ENCODE measurements at regions of chr20 and their contacts with region 1.

Region 1: DNA sequence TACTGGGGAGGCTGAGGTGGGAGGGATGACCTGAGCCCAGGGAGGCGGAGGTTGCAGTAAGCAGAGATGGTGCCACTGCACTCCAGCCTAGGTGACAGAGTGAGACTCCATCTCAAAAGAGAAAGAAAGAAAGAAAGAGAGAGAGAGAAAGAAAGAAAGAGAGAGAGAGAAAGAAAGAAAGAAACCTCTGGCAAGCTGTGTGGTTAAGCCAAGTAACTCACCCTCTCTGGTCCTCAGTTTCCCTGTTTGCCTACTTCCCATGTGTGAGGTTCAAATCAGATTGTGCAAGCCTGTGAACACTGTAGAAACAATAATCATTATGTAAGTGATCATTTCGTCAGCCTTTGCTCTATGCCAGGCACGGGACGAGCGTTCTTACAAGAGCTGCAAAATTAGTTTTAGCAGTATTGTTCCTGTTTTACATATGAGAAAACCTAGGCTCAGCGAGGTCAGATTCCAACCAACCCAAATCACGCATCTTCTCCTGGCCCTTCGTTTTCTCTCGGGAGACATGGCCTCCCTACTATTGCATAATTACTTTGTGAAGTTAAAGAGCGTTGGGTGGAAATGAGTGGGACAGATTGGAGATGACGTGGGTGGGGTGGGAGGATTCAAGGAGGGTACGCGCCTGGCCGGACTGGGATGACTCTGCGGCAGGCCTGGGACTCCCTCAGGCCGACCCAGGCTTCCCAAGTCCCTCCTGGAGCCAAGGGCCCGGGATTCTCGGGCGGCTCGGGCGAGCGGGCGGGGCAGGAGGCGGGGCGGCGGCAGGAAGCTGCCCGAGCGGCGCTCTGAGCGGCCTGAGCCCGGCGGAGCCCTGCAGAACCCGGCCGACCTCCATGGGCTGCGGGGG is at the start of gene SNX21:
- DNase-seq: peak; percentile 89 to 92
- ATAC-seq: peak; percentile 88 to 92 (median 89)
- H3K4me3 ChIP-seq: peak within 1 kb of the TSS; percentile 49 to 90 (median 75)
- H3K27ac ChIP-seq: peak within 1 kb of the TSS; percentile 78 to 99 (median 95)
- H3K4me1 ChIP-seq: peaks cover 7 to 59% (median 39%) of the 10 kb centered on the region in 9 donors
- H3K27me3 ChIP-seq: no peaks in the 10 kb centered on the region
- CTCF ChIP-seq: no peak
- total RNA-seq, gene SNX21: 15.4 to 27.0 (median 19.3) TPM

Region 2: GRCh38 chr20:45798935-45799642 is 34.2 kb before region 1 on chr20:
- intact Hi-C with region 1: no loop called
- DNase-seq: peak in 1 of 2 donors; percentile 61
- ATAC-seq: peak; percentile 55 to 86 (median 70)
- H3K4me3 ChIP-seq: no peak overlapping the region
- H3K27ac ChIP-seq: peak overlapping the region in 1 of 10 donors; percentile 6
- H3K4me1 ChIP-seq: peaks cover 0 to 27% (median 4%) of the 10 kb centered on the region in 9 donors
- H3K27me3 ChIP-seq: no peaks in the 10 kb centered on the region
- CTCF ChIP-seq: peak; percentile 48 to 82 (median 71)

Region 3: GRCh38 chr20:45857114-45857881 is 24.0 kb after region 1 on chr20 and contains the starts of genes ACOT8 and ZSWIM3:
- intact Hi-C with region 1: loop called in 1 of 10 experiments (anchors 2 kb)
- DNase-seq: peak; percentile 80 to 100
- ATAC-seq: peak; percentile 97 to 99 (median 99)
- H3K4me3 ChIP-seq: peak within 1 kb of the TSS; percentile 60 to 99 (median 86)
- H3K27ac ChIP-seq: peak within 1 kb of the TSS; percentile 7 to 96 (median 87)
- H3K4me1 ChIP-seq: peaks cover 10 to 42% (median 35%) of the 10 kb centered on the region in 9 donors
- H3K27me3 ChIP-seq: no peaks in the 10 kb centered on the region
- CTCF ChIP-seq: no peak
- total RNA-seq, gene ACOT8: 21.3 to 34.1 (median 27.4) TPM
- total RNA-seq, gene ZSWIM3: 1.4 to 2.5 (median 2.0) TPM

Measured in heart right ventricle (tissue), 16 donors.